Activated CD8-positive, alpha-beta T cell treated with anti-CD3 and anti-CD28 coated beads for 36 hours (primary cell): ENCODE measurements at regions of chr13 and their contacts with region 1.

Region 1: GRCh38 chr13:31909864-31910551 is 121.6 kb upstream of the FRY start:
- DNase-seq: peak; percentile 48
- ATAC-seq: no peak
- H3K4me3 Mint-ChIP-seq: no peak overlapping the region
- H3K27ac Mint-ChIP-seq: no peak overlapping the region
- H3K4me1 Mint-ChIP-seq: no peaks in the 10 kb centered on the region
- H3K27me3 Mint-ChIP-seq: peaks cover 3% of the 10 kb centered on the region
- CTCF ChIP-seq: peak; percentile 91

Region 2: DNA sequence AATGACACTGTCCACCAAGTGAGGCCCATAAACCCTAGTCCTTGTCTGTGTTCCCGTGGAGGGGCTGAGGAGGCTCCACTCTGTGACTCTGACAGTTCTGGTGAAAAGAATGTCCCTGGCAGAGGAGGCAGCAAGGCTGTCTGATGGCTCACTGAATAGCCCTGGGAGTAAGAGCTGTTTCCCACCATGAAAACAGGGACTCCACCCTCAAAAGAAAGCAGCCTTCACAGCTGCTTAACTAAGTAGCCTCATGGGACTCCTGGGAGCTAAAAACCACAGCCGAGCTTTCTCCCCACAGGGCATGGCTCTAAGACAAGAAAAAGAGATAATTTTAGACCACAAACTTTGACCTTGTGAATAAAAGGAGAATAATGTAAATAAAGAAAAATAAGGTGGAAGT is 13.6 kb before region 1 on chr13:
- CTCF ChIA-PET with region 1: interaction called, 12 read pairs
- POLR2A ChIA-PET with region 1: no interaction called
- intact Hi-C with region 1: no loop called
- DNase-seq: no peak
- ATAC-seq: no peak
- H3K4me3 Mint-ChIP-seq: no peak overlapping the region
- H3K27ac Mint-ChIP-seq: no peak overlapping the region
- H3K4me1 Mint-ChIP-seq: no peaks in the 10 kb centered on the region
- H3K27me3 Mint-ChIP-seq: no peaks in the 10 kb centered on the region
- CTCF ChIP-seq: no peak

Region 3: DNA sequence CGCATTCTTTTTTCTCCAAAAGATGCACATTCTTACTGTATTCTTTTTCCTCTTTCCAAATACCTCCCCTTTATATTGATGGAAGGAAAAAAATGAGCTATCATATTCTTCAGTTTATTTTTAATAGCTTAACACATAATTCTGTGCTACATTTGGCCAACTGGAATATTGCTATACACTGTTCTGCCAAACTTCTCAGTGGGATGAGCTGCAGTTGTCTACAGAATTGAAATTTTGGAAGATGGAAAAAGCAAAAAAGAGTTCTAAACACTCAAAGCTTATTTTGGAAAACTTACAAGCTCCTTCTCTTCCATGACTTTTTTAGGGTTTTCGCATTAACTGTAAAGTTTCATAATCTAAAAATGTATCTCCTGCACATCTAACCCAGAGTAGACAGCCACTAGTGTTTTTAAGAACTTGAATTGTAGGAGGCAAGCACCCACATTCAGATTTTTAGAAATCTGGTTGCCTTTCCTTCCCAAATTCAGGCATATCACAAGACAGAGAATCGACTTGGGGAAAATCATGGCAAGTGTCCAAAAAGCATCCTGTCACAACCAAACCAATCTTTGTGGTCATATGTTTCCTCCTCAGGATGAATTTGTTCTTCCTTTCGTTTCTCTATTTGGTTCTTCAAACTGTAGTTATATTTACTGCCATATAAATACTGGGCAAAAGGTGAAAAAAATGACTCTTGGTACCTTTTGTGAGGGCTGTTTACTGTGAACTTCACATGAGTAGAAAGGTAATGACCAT is 10.1 kb after region 1 on chr13:
- CTCF ChIA-PET with region 1: interaction called, 36 read pairs
- POLR2A ChIA-PET with region 1: no interaction called
- intact Hi-C with region 1: no loop called
- DNase-seq: no peak
- ATAC-seq: no peak
- H3K4me3 Mint-ChIP-seq: no peak overlapping the region
- H3K27ac Mint-ChIP-seq: no peak overlapping the region
- H3K4me1 Mint-ChIP-seq: no peaks in the 10 kb centered on the region
- H3K27me3 Mint-ChIP-seq: no peaks in the 10 kb centered on the region
- CTCF ChIP-seq: no peak

Region 4: GRCh38 chr13:31929031-31929770 is 19.2 kb after region 1 on chr13:
- CTCF ChIA-PET with region 1: interaction called, 11 read pairs
- POLR2A ChIA-PET with region 1: no interaction called
- intact Hi-C with region 1: no loop called
- DNase-seq: no peak
- ATAC-seq: no peak
- H3K4me3 Mint-ChIP-seq: no peak overlapping the region
- H3K27ac Mint-ChIP-seq: no peak overlapping the region
- H3K4me1 Mint-ChIP-seq: no peaks in the 10 kb centered on the region
- H3K27me3 Mint-ChIP-seq: peaks cover 1% of the 10 kb centered on the region
- CTCF ChIP-seq: no peak

Region 5: DNA sequence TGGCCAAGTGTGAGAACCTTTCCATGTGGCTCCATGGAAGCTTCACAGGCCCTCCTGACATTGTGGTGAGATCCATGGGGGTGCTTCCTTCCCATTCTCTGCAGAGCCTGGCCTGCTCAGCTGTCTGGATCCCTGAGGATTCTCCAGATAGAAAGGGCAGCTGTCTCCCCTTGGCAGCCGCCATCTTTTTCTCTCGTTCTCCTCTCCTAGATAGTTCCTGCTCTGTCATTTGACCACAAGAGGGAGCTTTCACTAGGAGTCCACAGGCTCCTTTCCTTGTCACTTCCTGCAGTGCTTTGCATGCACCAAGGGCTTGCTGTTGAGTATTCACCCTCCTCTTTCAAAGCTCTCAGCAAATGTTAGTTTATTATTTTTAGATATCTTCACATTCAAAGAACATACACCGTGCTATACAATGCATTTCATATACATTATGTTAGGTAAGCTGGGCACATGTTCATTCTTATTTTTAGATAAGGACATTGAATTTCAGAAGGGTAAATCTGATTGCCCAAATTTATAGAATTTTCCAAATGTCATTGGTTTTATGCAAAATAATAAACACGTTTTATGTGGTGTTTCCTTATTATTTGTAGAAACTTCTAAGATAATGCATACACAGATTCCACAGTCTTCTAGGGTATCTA is 254.7 kb after region 1 on chr13:
- CTCF ChIA-PET with region 1: interaction called, 11 read pairs
- POLR2A ChIA-PET with region 1: no interaction called
- intact Hi-C with region 1: no loop called
- DNase-seq: peak; percentile 15
- ATAC-seq: peak; percentile 69
- H3K4me3 Mint-ChIP-seq: no peak overlapping the region
- H3K27ac Mint-ChIP-seq: no peak overlapping the region
- H3K4me1 Mint-ChIP-seq: no peaks in the 10 kb centered on the region
- H3K27me3 Mint-ChIP-seq: no peaks in the 10 kb centered on the region
- CTCF ChIP-seq: peak; percentile 30

Region 6: GRCh38 chr13:32310134-32310706 is 400.2 kb after region 1 on chr13:
- CTCF ChIA-PET with region 1: interaction called, 7 read pairs
- POLR2A ChIA-PET with region 1: no interaction called
- intact Hi-C with region 1: loop called (anchors 2 kb)
- DNase-seq: peak; percentile 25
- ATAC-seq: peak; percentile 40
- H3K4me3 Mint-ChIP-seq: no peak overlapping the region
- H3K27ac Mint-ChIP-seq: no peak overlapping the region
- H3K4me1 Mint-ChIP-seq: peaks cover 19% of the 10 kb centered on the region
- H3K27me3 Mint-ChIP-seq: no peaks in the 10 kb centered on the region
- CTCF ChIP-seq: peak; percentile 61

Region 7: GRCh38 chr13:32581177-32581786 is 671.3 kb after region 1 on chr13:
- CTCF ChIA-PET with region 1: interaction called, 16 read pairs
- POLR2A ChIA-PET with region 1: no interaction called
- intact Hi-C with region 1: no loop called
- DNase-seq: no peak
- ATAC-seq: no peak
- H3K4me3 Mint-ChIP-seq: no peak overlapping the region
- H3K27ac Mint-ChIP-seq: no peak overlapping the region
- H3K4me1 Mint-ChIP-seq: peaks cover 9% of the 10 kb centered on the region
- H3K27me3 Mint-ChIP-seq: peaks cover 3% of the 10 kb centered on the region
- CTCF ChIP-seq: peak; percentile 84